ENCODE measurements at regions of chr22 and their contacts with region 1.

Region 1: DNA sequence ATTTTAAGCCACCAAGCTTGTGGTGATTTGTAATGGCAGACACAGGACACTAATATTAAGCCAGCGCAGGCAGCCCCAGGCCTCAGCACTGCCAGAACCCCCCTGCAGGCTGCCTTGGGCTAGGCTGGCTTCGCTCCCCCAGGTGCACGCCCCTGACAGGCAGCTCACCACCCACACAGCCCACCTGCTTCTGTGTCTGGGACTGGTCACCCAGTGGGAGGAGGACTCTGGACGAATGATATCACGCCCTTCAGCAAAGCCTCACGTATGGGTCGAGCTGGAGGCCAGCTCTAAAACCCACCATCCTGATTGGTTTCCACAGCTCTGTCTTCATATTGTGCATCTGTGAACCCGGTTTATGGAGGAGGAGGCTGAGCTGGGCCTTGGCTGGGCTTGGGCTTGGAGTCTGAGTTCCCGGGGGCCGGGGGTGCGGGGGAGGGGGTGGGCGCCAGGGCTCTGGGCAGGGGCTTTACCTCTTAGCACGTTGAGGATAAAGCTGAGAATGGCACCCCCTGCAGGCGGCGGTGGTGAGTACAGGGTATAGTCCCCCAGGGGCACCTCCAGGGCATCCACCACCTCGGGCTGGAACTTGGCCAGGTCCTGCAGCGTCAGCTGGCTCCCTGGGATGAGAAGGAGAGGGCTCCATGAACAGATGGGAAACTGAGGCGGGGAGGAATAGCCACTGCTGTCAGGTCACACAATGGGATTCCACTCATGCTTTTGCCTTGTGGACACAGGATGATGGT is 13.8 kb downstream of the GGT5 start:
- DNase-seq: peak; percentile 84
- ATAC-seq: peak; percentile 95
- H3K4me3 Mint-ChIP-seq: no peak overlapping the region
- H3K27ac Mint-ChIP-seq: no peak overlapping the region
- H3K4me1 Mint-ChIP-seq: no peaks in the 10 kb centered on the region
- H3K27me3 Mint-ChIP-seq: no peaks in the 10 kb centered on the region
- CTCF ChIP-seq: peak; percentile 79

Region 2: GRCh38 chr22:24117942-24118341 is 113.1 kb before region 1 on chr22:
- CTCF ChIA-PET with region 1: no interaction called
- POLR2A ChIA-PET with region 1: no interaction called
- intact Hi-C with region 1: no loop called
- DNase-seq: peak; percentile 10
- ATAC-seq: no peak
- H3K4me3 Mint-ChIP-seq: no peak overlapping the region
- H3K27ac Mint-ChIP-seq: no peak overlapping the region
- H3K4me1 Mint-ChIP-seq: no peaks in the 10 kb centered on the region
- H3K27me3 Mint-ChIP-seq: no peaks in the 10 kb centered on the region
- CTCF ChIP-seq: no peak

Region 3: GRCh38 chr22:24189249-24190158 is 41.6 kb before region 1 on chr22:
- CTCF ChIA-PET with region 1: interaction called, 5 read pairs
- POLR2A ChIA-PET with region 1: no interaction called
- intact Hi-C with region 1: loop called (anchors 10 kb)
- DNase-seq: peak; percentile 64
- ATAC-seq: peak; percentile 94
- H3K4me3 Mint-ChIP-seq: no peak overlapping the region
- H3K27ac Mint-ChIP-seq: no peak overlapping the region
- H3K4me1 Mint-ChIP-seq: no peaks in the 10 kb centered on the region
- H3K27me3 Mint-ChIP-seq: no peaks in the 10 kb centered on the region
- CTCF ChIP-seq: peak; percentile 83

Region 4: GRCh38 chr22:24214467-24215285 is 16.4 kb before region 1 on chr22:
- CTCF ChIA-PET with region 1: interaction called, 13 read pairs
- POLR2A ChIA-PET with region 1: interaction called, 3 read pairs
- intact Hi-C with region 1: no loop called
- DNase-seq: no peak
- ATAC-seq: no peak
- H3K4me3 Mint-ChIP-seq: no peak overlapping the region
- H3K27ac Mint-ChIP-seq: no peak overlapping the region
- H3K4me1 Mint-ChIP-seq: peaks cover 6% of the 10 kb centered on the region
- H3K27me3 Mint-ChIP-seq: no peaks in the 10 kb centered on the region
- CTCF ChIP-seq: no peak